Mammary epithelial cell (primary cell): ENCODE measurements at regions of chr19 and their contacts with region 1.

Region 1: GRCh38 chr19:57320180-57321084 is at the start of gene ZNF543:
- DNase-seq: peak; percentile 96
- H3K4me3 ChIP-seq: peak within 1 kb of the TSS; percentile 81 to 96 (median 90)
- H3K27ac ChIP-seq: peak within 1 kb of the TSS; percentile 72
- H3K4me1 ChIP-seq: peaks cover 14% of the 10 kb centered on the region
- H3K27me3 ChIP-seq: no peaks in the 10 kb centered on the region
- CTCF ChIP-seq: peak in 1 of 2 donors; percentile 4
- total RNA-seq, gene ZNF543: 7.4 to 15.2 TPM

Region 2: GRCh38 chr19:57477191-57478008 is 157.0 kb after region 1 on chr19 and contains the start of gene ZNF772:
- CTCF ChIA-PET with region 1: no interaction called
- dilution Hi-C with region 1: loop called (anchors 10 kb)
- in situ Hi-C with region 1: no loop called
- intact Hi-C with region 1: no loop called
- DNase-seq: peak; percentile 91
- H3K4me3 ChIP-seq: peak within 1 kb of the TSS; percentile 50 to 78 (median 66)
- H3K27ac ChIP-seq: no peak within 1 kb of the TSS
- H3K4me1 ChIP-seq: peaks cover 7% of the 10 kb centered on the region
- H3K27me3 ChIP-seq: no peaks in the 10 kb centered on the region
- CTCF ChIP-seq: peak; percentile 45 to 47
- total RNA-seq, gene ZNF772: 11.7 to 15.0 TPM